ENCODE measurements at regions of chr3 and their contacts with region 1.

Region 1: GRCh38 chr3:192130534-192131132 is 596.7 kb downstream of the FGF12 start:
- DNase-seq: peak in 1 of 2 donors; percentile 14
- ATAC-seq: peak in 1 of 2 donors; percentile 46
- H3K4me3 ChIP-seq: no peak overlapping the region
- H3K27ac ChIP-seq: no peak overlapping the region
- H3K4me1 ChIP-seq: no peaks in the 10 kb centered on the region
- H3K27me3 ChIP-seq: no peaks in the 10 kb centered on the region
- CTCF ChIP-seq: peak in 4 of 5 experiments; percentile 35 to 63 (median 50)
- POLR2A ChIP-seq: no peak

Region 2: GRCh38 chr3:192433704-192434103 is 303.1 kb after region 1 on chr3:
- in situ Hi-C with region 1: loop called in 1 of 4 experiments (anchors 10 kb)
- intact Hi-C with region 1: no loop called
- DNase-seq: no peak
- ATAC-seq: no peak
- H3K4me3 ChIP-seq: no peak overlapping the region
- H3K27ac ChIP-seq: no peak overlapping the region
- H3K4me1 ChIP-seq: no peaks in the 10 kb centered on the region
- H3K27me3 ChIP-seq: no peaks in the 10 kb centered on the region
- CTCF ChIP-seq: no peak
- POLR2A ChIP-seq: no peak

Region 3: DNA sequence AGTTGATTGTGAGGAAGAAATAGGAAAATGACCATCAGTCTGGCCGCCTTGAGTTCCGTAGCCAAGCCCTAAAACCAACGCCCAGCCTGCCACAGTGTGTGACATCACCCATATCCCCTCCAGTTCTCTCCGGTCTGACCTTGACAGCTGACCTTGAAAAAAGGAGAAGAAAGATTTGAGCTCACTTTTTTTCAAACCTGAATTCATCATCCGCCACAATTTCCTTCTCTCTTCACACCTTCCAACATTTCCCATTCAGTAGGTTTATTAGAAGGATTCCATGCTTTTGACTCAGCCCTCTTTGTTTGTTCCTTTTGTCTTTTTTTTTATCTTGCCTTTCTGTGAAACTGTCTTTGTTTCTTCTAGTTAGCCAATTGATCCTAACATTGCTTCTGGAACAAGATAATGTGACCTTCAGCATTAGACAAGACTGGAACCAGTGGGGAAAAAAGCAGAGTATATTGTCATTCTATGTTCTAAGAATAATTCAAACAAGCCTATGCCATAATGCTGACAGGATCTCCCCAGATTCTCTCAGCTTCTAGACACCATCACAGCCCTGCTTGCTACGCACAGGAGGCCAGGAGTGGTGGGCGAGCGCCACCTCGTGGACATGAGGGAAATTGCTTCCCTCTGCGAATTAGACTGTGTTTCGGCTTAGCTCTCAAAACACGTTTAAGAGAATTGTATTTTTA is 313.6 kb after region 1 on chr3:
- in situ Hi-C with region 1: loop called in 2 of 4 experiments (anchors 10 kb)
- intact Hi-C with region 1: loop called (anchors 2 kb)
- DNase-seq: peak in 1 of 2 donors; percentile 23
- ATAC-seq: peak; percentile 56 to 72
- H3K4me3 ChIP-seq: no peak overlapping the region
- H3K27ac ChIP-seq: no peak overlapping the region
- H3K4me1 ChIP-seq: no peaks in the 10 kb centered on the region
- H3K27me3 ChIP-seq: peaks cover 0 to 19% (median 0%) of the 10 kb centered on the region in 3 donors
- CTCF ChIP-seq: peak; percentile 69 to 97 (median 83)
- POLR2A ChIP-seq: no peak